ENCODE measurements at regions of chr5 and their contacts with region 1.

Region 1: GRCh38 chr5:174424219-174425053 is 299.9 kb upstream of the MSX2 start:
- DNase-seq: no peak
- ATAC-seq: no peak
- H3K4me3 ChIP-seq: no peak overlapping the region
- H3K27ac ChIP-seq: no peak overlapping the region
- H3K4me1 ChIP-seq: peaks cover 0 to 11% (median under 1%) of the 10 kb centered on the region in 12 donors
- H3K27me3 ChIP-seq: peaks cover 0 to 34% (median 3%) of the 10 kb centered on the region in 9 donors
- CTCF ChIP-seq: no peak
- POLR2A ChIP-seq: no peak

Region 2: GRCh38 chr5:174384509-174384947 is 39.9 kb before region 1 on chr5:
- intact Hi-C with region 1: no loop called
- DNase-seq: peak in 1 of 5 donors; percentile 34
- ATAC-seq: peak in 1 of 4 donors; percentile 63
- H3K4me3 ChIP-seq: no peak overlapping the region
- H3K27ac ChIP-seq: peak overlapping the region in 1 of 12 donors; percentile 27
- H3K4me1 ChIP-seq: no peaks in the 10 kb centered on the region
- H3K27me3 ChIP-seq: peaks cover 0 to 34% (median 0%) of the 10 kb centered on the region in 9 donors
- CTCF ChIP-seq: no peak
- POLR2A ChIP-seq: no peak

Region 3: DNA sequence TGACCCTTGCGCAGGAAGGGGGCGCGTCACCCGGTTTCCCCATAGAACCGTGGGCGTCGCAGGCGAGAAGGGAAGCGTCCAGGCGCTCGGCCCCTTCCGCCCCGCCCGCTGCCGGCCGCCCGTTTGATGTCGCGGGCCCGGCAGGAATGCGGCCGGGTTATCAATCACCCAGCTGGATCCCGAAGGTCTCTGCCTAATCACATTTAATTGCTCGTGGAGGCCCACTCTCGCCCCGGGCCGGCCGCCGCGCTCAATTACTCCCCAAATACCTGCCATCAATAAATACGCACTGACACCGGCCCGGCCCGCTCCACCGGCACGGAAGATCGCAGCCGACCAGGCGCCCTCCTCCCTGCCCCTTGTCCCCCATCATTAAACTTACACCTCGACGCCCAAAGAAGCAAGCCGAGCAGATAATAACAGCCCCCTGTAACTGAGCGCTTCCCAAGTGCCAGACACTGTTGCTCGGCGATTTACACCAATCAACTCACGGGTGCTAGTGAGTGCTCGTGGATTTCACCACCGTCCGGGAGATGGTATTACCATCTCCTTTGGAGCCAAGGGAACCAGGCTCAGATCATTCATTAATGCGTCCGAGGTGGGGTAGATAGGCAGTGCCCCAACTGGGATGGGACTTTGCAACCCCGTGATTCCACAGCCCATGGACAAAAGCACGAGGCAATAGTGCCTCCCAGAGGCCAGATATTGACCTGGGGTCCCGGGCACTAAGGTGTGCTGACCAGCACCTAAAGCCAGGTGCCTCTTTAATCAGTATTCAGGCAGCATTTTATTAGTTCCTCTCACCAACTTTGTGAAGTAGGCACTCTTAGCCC is 311.3 kb after region 1 on chr5:
- intact Hi-C with region 1: loop called in 4 of 10 experiments (anchors 5 to 10 kb)
- DNase-seq: no peak
- ATAC-seq: no peak
- H3K4me3 ChIP-seq: peak overlapping the region in 2 of 12 donors; percentile 2 to 13
- H3K27ac ChIP-seq: no peak overlapping the region
- H3K4me1 ChIP-seq: peaks cover 0 to 14% (median 4%) of the 10 kb centered on the region in 12 donors
- H3K27me3 ChIP-seq: peaks cover 35 to 90% (median 66%) of the 10 kb centered on the region in 9 donors
- CTCF ChIP-seq: peak in 8 of 12 donors; percentile 14 to 41 (median 26)
- POLR2A ChIP-seq: no peak

Region 4: GRCh38 chr5:174793684-174794328 is 369.4 kb after region 1 on chr5:
- intact Hi-C with region 1: loop called (anchors 1 to 5 kb)
- DNase-seq: peak; percentile 37 to 76 (median 43)
- ATAC-seq: peak in 3 of 4 donors; percentile 57 to 88 (median 85)
- H3K4me3 ChIP-seq: no peak overlapping the region
- H3K27ac ChIP-seq: no peak overlapping the region
- H3K4me1 ChIP-seq: peaks cover 0 to 6% (median 0%) of the 10 kb centered on the region in 12 donors
- H3K27me3 ChIP-seq: peaks cover 0 to 51% (median 23%) of the 10 kb centered on the region in 9 donors
- CTCF ChIP-seq: peak; percentile 60 to 85 (median 76)
- POLR2A ChIP-seq: no peak

Region 5: GRCh38 chr5:174935854-174936474 is 511.5 kb after region 1 on chr5:
- intact Hi-C with region 1: loop called (anchors 1 to 10 kb)
- DNase-seq: peak; percentile 40 to 72 (median 46)
- ATAC-seq: peak in 3 of 4 donors; percentile 72 to 80 (median 80)
- H3K4me3 ChIP-seq: no peak overlapping the region
- H3K27ac ChIP-seq: no peak overlapping the region
- H3K4me1 ChIP-seq: no peaks in the 10 kb centered on the region
- H3K27me3 ChIP-seq: peaks cover 0 to 16% (median 0%) of the 10 kb centered on the region in 9 donors
- CTCF ChIP-seq: peak; percentile 75 to 93 (median 86)
- POLR2A ChIP-seq: no peak

Measured in heart left ventricle (tissue), 16 donors.